ENCODE measurements at regions of chr5 and their contacts with region 1.

Region 1: DNA sequence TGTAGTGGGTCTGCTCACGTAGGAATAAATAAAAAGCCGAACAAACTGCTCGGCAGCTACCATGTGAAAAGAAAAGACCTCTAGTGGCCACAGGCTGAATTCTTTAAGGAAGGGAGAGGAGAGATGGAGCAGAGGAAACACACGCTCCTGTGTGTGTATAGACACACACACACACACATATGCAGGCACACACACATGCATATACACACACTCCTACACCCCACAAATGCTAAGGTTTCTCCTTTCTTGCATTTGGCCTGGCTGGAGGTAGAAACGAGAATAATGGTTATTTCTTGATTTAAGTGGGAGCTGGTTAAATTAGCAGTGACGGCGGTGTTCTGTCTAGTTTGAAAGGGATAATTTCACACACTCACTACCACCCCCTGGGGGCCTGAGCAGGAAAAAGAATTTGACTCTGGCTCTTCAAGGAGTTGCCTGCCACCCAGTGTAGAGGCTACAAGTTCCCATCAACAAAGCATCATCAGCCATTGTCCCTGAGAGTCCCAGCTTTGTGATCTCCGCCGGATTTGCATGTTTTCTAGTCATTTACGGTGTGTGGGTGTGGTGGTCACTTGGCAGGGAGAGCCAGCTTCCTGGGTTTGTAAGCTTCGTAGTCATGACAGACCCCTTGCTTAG is at the start of gene INSYN2B:
- DNase-seq: no peak
- ATAC-seq: peak; percentile 90
- H3K4me3 ChIP-seq: no peak within 1 kb of the TSS
- H3K27ac ChIP-seq: no peak within 1 kb of the TSS
- H3K4me1 ChIP-seq: peaks cover 4% of the 10 kb centered on the region; the same call in 1 of the 2 replicates
- H3K27me3 ChIP-seq: no peaks in the 10 kb centered on the region
- CTCF ChIP-seq: peak in 2 of 3 experiments; percentile 33 to 71; a peak in 3 of 6 replicates
- EP300 ChIP-seq: no peak
- POLR2A ChIP-seq: no peak
- RAD21 ChIP-seq: peak; percentile 67
- polyA plus RNA-seq, gene INSYN2B: 0.05 TPM in 1 of 2 experiments, not detected in the other

Region 2: GRCh38 chr5:169670769-169671525 is 309.6 kb before region 1 on chr5:
- CTCF ChIA-PET with region 1: interaction called, 14 read pairs
- POLR2A ChIA-PET with region 1: no interaction called
- RAD21 ChIA-PET with region 1: interaction called, 3 read pairs
- SMC1A ChIA-PET with region 1: interaction called, 7 read pairs
- in situ Hi-C with region 1: no loop called
- intact Hi-C with region 1: no loop called
- DNase-seq: peak; percentile 80
- ATAC-seq: peak; percentile 98
- H3K4me3 ChIP-seq: peak overlapping the region; percentile 42; the same call in 1 of the 2 replicates
- H3K27ac ChIP-seq: peak overlapping the region; percentile 95
- H3K4me1 ChIP-seq: peaks cover 33% of the 10 kb centered on the region
- H3K27me3 ChIP-seq: no peaks in the 10 kb centered on the region
- CTCF ChIP-seq: no peak
- EP300 ChIP-seq: peak; percentile 67 to 69; a peak in 3 of 4 replicates
- POLR2A ChIP-seq: no peak
- RAD21 ChIP-seq: peak; percentile 20; the same call in 1 of the 2 replicates

Region 3: DNA sequence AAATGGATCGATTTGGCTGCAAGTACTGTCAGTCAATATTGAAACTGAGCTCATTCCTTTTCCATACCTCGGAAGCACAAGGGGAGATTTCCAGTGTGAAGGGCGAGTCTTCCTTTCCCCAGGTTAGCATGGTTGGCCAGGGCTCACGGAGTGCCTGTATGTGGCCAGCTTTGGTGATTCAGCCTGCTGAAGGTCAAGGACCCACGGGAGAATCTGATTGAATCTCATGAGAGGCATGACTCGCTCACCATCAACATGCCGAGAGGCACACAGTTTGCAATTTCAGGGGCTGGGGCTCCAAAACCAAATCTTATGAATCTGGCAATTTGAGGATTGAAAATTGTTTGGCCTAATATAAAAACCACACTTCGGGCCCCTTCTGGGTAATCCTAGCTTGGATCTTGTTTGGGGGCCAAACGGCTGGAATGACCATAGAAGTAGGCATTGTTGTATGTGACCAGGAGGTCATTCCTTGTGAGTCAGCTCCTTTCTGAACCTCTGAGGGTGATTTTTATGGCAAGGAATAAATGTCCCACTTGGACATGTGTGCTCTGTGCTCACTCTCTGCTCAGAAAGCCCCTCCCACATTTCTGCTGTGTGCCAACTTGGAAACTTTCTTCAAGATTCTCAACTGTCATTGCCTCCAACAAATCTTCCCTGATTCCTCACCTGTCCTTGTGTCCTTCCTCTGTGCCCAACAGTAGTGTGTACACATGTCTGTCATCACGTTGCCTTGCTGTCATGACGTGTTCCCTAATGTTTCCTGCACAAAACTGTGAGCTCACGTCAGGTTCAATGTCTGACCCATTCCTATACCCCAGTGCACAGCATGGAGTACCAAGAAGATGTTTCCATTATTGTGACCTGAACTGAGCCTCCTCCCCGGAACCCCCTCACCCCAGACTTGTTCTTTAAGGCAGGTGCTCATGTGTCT is 273.5 kb before region 1 on chr5:
- CTCF ChIA-PET with region 1: interaction called, 73 read pairs
- POLR2A ChIA-PET with region 1: no interaction called
- RAD21 ChIA-PET with region 1: interaction called, 44 read pairs
- SMC1A ChIA-PET with region 1: interaction called, 41 read pairs
- in situ Hi-C with region 1: no loop called
- intact Hi-C with region 1: no loop called
- DNase-seq: no peak
- ATAC-seq: no peak
- H3K4me3 ChIP-seq: no peak overlapping the region
- H3K27ac ChIP-seq: peak overlapping the region; percentile 60
- H3K4me1 ChIP-seq: peaks cover 45% of the 10 kb centered on the region
- H3K27me3 ChIP-seq: no peaks in the 10 kb centered on the region
- CTCF ChIP-seq: no peak
- EP300 ChIP-seq: no peak
- POLR2A ChIP-seq: no peak
- RAD21 ChIP-seq: no peak

Region 4: GRCh38 chr5:169763376-169764017 is 217.0 kb before region 1 on chr5:
- CTCF ChIA-PET with region 1: interaction called, 14 read pairs
- POLR2A ChIA-PET with region 1: no interaction called
- RAD21 ChIA-PET with region 1: interaction called, 4 read pairs
- SMC1A ChIA-PET with region 1: interaction called, 7 read pairs
- in situ Hi-C with region 1: no loop called
- intact Hi-C with region 1: no loop called
- DNase-seq: peak; percentile 45
- ATAC-seq: peak; percentile 87
- H3K4me3 ChIP-seq: no peak overlapping the region
- H3K27ac ChIP-seq: no peak overlapping the region
- H3K4me1 ChIP-seq: peaks cover 5% of the 10 kb centered on the region; the same call in 1 of the 2 replicates
- H3K27me3 ChIP-seq: no peaks in the 10 kb centered on the region
- CTCF ChIP-seq: no peak
- EP300 ChIP-seq: 0 out of 4 replicates have a peak, but pooled peaks of 1 of the 2 experiments have one; percentile 19
- POLR2A ChIP-seq: no peak
- RAD21 ChIP-seq: no peak

Region 5: GRCh38 chr5:169923988-169924387 is 56.5 kb before region 1 on chr5:
- CTCF ChIA-PET with region 1: interaction called, 3 read pairs
- POLR2A ChIA-PET with region 1: no interaction called
- RAD21 ChIA-PET with region 1: no interaction called
- SMC1A ChIA-PET with region 1: interaction called, 13 read pairs
- in situ Hi-C with region 1: no loop called
- intact Hi-C with region 1: no loop called
- DNase-seq: peak; percentile 27
- ATAC-seq: peak; percentile 92
- H3K4me3 ChIP-seq: no peak overlapping the region
- H3K27ac ChIP-seq: peak overlapping the region; percentile 52
- H3K4me1 ChIP-seq: peaks cover 5% of the 10 kb centered on the region; the same call in 1 of the 2 replicates
- H3K27me3 ChIP-seq: no peaks in the 10 kb centered on the region
- CTCF ChIP-seq: no peak
- EP300 ChIP-seq: no peak
- POLR2A ChIP-seq: no peak
- RAD21 ChIP-seq: no peak

Region 6: DNA sequence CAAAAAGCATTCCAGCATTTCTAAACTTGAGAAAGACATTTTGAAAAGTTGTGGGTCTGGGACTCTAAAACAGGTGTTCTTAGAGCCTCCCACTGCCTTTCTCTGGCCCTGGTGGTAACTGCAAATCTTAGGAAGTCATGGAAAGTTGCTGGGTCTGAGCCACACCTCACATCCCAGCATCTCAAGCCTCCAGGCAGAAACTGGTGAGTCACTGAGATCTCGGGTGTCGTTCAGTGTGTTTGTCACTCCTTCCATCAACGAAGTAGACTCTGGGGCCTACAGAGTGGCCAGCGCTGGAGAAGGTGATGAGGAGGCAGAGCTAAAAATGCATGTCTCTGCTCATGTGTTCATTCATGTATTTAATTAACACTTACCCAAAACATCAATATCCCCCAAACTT is 192.7 kb after region 1 on chr5:
- CTCF ChIA-PET with region 1: no interaction called
- POLR2A ChIA-PET with region 1: no interaction called
- RAD21 ChIA-PET with region 1: no interaction called
- SMC1A ChIA-PET with region 1: no interaction called
- in situ Hi-C with region 1: no loop called
- intact Hi-C with region 1: no loop called
- DNase-seq: no peak
- ATAC-seq: no peak
- H3K4me3 ChIP-seq: no peak overlapping the region
- H3K27ac ChIP-seq: no peak overlapping the region
- H3K4me1 ChIP-seq: peaks cover 6% of the 10 kb centered on the region
- H3K27me3 ChIP-seq: peaks cover 0 to 1% of the 10 kb centered on the region in 2 experiments; a peak in 2 of 4 replicates
- CTCF ChIP-seq: no peak
- EP300 ChIP-seq: no peak
- POLR2A ChIP-seq: no peak
- RAD21 ChIP-seq: no peak

Measured in GM12878 (cell line).